Mammary epithelial cell (primary cell): ENCODE measurements at regions of chr20 and their contacts with region 1.

Region 1: GRCh38 chr20:39264506-39265172 is 302.5 kb downstream of the DHX35 start:
- DNase-seq: peak; percentile 83
- H3K4me3 ChIP-seq: no peak overlapping the region
- H3K27ac ChIP-seq: no peak overlapping the region
- H3K4me1 ChIP-seq: no peaks in the 10 kb centered on the region
- H3K27me3 ChIP-seq: no peaks in the 10 kb centered on the region
- CTCF ChIP-seq: peak; percentile 92 to 97

Region 2: DNA sequence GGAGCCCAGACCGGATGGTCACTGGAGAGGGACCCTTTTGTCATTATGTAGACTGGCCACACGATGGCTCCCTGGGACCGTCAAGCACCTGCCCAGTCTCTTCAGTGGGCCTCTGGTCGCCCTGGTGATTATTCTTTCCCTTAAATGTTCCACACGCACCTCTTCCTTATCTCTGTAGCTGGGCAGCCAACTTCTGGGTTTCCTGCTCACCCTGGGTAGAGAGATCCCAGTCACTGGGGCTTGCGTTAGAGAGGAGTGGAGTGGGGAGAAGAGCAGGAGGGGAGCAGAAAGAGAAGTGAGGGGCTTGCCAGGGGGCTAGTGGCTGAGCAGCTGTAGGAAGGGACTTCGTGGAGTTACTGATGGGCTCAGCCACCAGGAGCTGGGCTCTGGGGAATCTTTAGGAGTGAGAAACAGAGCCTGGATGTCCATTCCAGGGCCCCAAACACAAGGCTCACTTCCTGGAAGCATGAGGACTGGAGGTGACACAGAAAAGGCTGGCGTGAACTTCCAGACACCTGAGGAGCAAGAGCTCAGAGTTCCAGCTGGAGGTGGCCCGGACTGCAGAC is 152.4 kb before region 1 on chr20:
- CTCF ChIA-PET with region 1: no interaction called
- dilution Hi-C with region 1: no loop called
- in situ Hi-C with region 1: no loop called
- intact Hi-C with region 1: loop called (anchors 1 kb)
- DNase-seq: peak; percentile 4
- H3K4me3 ChIP-seq: no peak overlapping the region
- H3K27ac ChIP-seq: no peak overlapping the region
- H3K4me1 ChIP-seq: no peaks in the 10 kb centered on the region
- H3K27me3 ChIP-seq: no peaks in the 10 kb centered on the region
- CTCF ChIP-seq: peak; percentile 52 to 70

Region 3: DNA sequence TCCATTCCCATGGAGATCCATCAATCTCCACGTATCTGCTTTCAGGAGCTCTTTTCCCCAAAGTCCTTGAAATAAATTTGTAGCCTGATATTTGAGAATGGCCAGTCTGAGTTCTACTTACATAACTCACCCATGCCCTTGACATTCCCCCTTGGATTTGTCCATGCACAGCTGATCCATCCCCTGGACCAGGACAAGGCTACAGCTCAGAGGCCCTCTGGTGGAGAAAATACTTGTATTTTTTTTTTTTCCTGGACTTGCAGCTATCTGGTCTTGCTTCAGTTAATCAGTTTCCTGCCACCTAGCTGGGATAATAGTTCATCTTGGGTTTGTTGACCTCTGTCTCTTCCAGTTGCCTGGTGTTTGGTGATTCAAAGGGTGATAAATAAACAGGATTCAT is 165.1 kb after region 1 on chr20:
- CTCF ChIA-PET with region 1: no interaction called
- dilution Hi-C with region 1: no loop called
- in situ Hi-C with region 1: no loop called
- intact Hi-C with region 1: loop called (anchors 10 kb)
- DNase-seq: no peak
- H3K4me3 ChIP-seq: no peak overlapping the region
- H3K27ac ChIP-seq: no peak overlapping the region
- H3K4me1 ChIP-seq: no peaks in the 10 kb centered on the region
- H3K27me3 ChIP-seq: no peaks in the 10 kb centered on the region
- CTCF ChIP-seq: peak in 1 of 2 donors; percentile 30

Region 4: GRCh38 chr20:39775110-39775509 is 510.5 kb after region 1 on chr20:
- CTCF ChIA-PET with region 1: no interaction called
- dilution Hi-C with region 1: no loop called
- in situ Hi-C with region 1: no loop called
- intact Hi-C with region 1: loop called (anchors 5 kb)
- DNase-seq: peak; percentile 41
- H3K4me3 ChIP-seq: no peak overlapping the region
- H3K27ac ChIP-seq: no peak overlapping the region
- H3K4me1 ChIP-seq: no peaks in the 10 kb centered on the region
- H3K27me3 ChIP-seq: no peaks in the 10 kb centered on the region
- CTCF ChIP-seq: no peak

Region 5: DNA sequence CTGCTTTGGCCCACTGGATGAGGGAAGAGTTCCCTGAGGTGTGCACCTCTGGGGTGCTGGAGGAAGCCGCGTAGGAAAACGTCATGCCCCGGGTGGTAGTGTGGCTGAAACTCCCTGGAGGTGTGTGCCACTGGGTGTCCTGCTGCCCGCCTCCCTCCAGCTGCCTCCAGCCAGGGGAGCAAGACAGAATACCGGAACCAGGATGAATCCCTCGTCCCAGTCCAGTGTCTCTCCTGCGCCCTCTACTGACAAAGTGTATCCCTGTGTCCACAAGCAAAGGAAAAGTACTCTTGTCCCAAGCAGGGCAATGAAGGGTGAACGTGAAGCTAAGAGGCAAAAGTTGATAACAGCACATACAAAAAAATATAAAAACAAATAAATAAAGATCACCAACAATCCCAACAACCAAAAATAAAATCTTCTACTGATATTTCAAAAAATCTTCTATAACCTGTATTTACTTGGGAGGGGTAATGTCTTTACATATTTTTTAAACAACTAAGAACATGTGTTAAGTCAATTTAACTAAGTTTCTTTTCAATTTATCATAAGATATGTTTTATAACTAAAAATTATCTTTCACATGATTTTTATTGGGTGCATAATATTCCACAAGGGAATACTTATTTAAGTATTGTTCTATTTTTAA is 986.8 kb after region 1 on chr20:
- CTCF ChIA-PET with region 1: no interaction called
- dilution Hi-C with region 1: no loop called
- in situ Hi-C with region 1: no loop called
- intact Hi-C with region 1: loop called (anchors 1 kb)
- DNase-seq: peak; percentile 48
- H3K4me3 ChIP-seq: no peak overlapping the region
- H3K27ac ChIP-seq: no peak overlapping the region
- H3K4me1 ChIP-seq: no peaks in the 10 kb centered on the region
- H3K27me3 ChIP-seq: no peaks in the 10 kb centered on the region
- CTCF ChIP-seq: peak; percentile 70 to 90